ENCODE measurements at regions of chr1 and their contacts with region 1.

Region 1: GRCh38 chr1:3423245-3423829 is 31.1 kb upstream of the ARHGEF16 start:
- DNase-seq: peak in 1 of 2 donors; percentile 65
- H3K4me3 ChIP-seq: no peak overlapping the region
- H3K27ac ChIP-seq: no peak overlapping the region
- H3K4me1 ChIP-seq: peaks cover 0 to 3% of the 10 kb centered on the region in 2 donors
- H3K27me3 ChIP-seq: no peaks in the 10 kb centered on the region
- CTCF ChIP-seq: no peak
- POLR2A ChIP-seq: no peak

Region 2: GRCh38 chr1:2821966-2822620 is 601.2 kb before region 1 on chr1:
- intact Hi-C with region 1: loop called (anchors 10 kb)
- DNase-seq: peak; percentile 90 to 91
- H3K4me3 ChIP-seq: no peak overlapping the region
- H3K27ac ChIP-seq: no peak overlapping the region
- H3K4me1 ChIP-seq: no peaks in the 10 kb centered on the region
- H3K27me3 ChIP-seq: no peaks in the 10 kb centered on the region
- CTCF ChIP-seq: peak; percentile 52 to 93 (median 64)
- POLR2A ChIP-seq: no peak

Region 3: DNA sequence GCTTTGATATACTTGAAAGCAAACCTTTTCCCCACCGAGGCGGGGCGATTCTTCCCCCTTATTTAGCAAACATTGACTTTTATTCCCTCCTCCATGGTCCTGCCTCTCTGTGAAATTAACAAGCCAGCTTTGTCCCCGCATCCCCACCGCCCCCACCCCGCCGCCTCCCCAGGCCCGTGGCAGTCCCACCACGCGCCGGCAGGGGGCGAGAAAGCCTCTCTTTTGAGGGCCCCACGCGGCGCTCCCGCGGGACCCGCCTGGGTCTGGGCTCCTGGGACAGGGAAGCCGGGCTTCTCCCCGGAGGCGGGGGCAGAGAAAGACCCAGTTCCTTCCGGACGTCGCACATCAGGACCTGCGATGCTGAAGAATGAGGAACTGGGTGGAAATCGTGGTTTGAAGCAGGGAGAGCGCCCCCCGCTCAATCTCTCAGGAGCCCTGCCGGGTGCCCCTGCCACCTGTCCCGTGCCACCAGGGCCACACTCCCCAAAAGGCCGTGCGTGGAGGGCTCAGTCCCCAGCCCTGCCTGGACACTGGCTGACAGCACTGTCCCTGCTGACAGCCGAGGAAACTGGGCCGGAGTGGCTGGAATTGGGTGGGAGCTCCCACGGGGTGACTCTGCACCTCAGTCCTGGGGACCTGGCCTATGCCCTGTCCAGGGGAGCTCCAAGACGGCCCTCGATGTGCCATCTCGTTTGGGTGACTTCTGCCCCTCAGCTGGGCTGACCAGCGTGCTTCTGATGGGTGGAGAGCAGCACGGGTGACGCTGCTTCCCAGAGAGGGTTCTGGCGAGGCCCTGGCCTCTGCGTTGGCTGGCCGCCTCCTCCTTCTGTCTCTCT is 410.7 kb before region 1 on chr1:
- intact Hi-C with region 1: loop called (anchors 5 kb)
- DNase-seq: peak; percentile 74 to 77
- H3K4me3 ChIP-seq: no peak overlapping the region
- H3K27ac ChIP-seq: no peak overlapping the region
- H3K4me1 ChIP-seq: peaks cover 17 to 21% of the 10 kb centered on the region in 2 donors
- H3K27me3 ChIP-seq: no peaks in the 10 kb centered on the region
- CTCF ChIP-seq: peak; percentile 29 to 93 (median 56)
- POLR2A ChIP-seq: no peak

Region 4: DNA sequence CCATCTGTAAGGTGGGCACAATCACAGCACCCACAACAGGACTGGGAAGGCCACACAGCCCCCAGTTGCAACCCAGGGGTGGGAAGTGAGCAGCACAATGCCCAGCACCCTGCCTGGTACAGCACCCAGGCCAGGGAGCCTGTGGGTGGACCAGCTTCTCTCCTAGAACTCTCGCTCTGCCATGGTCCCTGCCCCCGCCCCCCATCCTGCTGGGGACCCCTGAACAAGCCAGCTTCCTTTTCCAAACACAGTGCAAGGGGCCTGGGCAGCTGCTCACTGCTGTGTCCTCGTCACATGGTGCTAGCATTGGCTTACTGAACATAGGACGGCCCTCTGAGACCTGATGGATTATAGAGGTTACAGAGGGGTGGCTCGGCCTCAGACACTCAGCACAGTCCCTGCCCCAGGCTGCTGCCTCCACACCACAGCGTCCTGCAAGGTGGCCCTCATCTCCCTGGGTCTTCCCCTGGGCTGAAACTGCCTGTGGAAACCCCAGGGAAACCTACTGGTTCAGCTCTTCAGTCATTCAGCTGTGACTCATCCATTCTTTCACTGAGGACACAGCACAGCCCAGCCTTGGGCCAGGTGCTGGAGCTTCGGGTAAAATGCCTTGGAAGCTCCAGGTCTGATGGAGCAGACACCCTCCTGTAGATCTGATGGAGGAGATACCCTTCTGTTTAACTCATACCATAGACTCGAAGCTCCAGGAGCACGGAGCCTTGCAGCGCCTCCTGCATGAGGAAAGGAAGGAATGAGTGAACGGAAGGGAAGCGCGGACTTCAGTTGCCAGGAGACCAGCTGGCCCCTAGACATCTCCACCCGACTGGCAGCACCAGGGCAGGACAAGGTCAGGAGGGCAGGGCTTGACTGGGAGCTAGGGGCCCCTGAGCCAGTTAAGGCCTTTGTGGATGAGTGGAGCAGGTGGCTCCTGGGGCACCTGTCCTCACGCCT is 362.5 kb before region 1 on chr1:
- intact Hi-C with region 1: loop called (anchors 5 kb)
- DNase-seq: no peak
- H3K4me3 ChIP-seq: no peak overlapping the region
- H3K27ac ChIP-seq: no peak overlapping the region
- H3K4me1 ChIP-seq: peaks cover 4 to 7% of the 10 kb centered on the region in 2 donors
- H3K27me3 ChIP-seq: no peaks in the 10 kb centered on the region
- CTCF ChIP-seq: no peak
- POLR2A ChIP-seq: no peak

Region 5: DNA sequence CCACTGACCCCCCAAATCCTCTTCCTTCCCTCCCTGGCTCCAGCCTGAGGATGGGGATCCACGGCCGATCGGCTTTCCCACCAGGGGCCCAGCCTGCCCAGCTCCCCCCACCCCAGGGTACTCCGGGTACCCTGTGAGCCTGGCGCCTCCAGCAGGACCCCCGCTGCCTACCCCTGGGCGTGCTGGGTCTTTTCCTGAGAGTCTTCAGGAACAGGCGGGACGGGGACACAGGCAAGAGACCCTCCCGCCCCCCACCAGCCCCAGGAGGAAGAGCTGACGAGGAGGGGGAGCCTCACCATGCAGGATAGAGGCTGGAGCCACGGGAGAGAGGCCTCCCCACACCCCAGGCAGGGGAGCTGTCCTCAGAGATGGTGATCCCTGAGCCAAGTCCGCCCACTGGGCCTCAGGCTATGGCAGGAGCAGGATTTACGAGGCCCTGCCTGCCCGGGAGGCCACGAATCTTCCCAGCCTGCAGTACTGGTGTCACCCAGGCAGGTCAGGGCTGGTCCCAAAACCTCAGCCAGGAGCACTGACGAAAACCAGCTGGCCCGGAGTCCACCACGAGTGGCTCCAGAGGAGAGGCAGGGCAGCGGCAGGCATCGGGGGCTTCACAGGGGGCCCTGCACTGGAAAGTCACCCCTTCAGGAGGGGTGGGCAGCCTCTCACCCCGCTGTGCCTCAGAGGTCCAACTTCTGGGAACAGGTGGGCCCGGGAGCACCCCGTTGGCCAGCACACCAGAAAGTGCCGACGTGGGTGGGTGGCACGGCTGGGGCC is 130.0 kb after region 1 on chr1:
- intact Hi-C with region 1: no loop called
- DNase-seq: no peak
- H3K4me3 ChIP-seq: no peak overlapping the region
- H3K27ac ChIP-seq: no peak overlapping the region
- H3K4me1 ChIP-seq: peaks cover 3 to 13% of the 10 kb centered on the region in 2 donors
- H3K27me3 ChIP-seq: no peaks in the 10 kb centered on the region
- CTCF ChIP-seq: no peak
- POLR2A ChIP-seq: no peak

Measured in thyroid gland (tissue), 4 donors.